AG04449 (cell line): ENCODE measurements at regions of chr22 and their contacts with region 1.

Region 1: GRCh38 chr22:46006379-46007002 is 29.5 kb upstream of the WNT7B start:
- DNase-seq: peak; percentile 42
- H3K4me3 ChIP-seq: 0 out of 2 replicates have a peak overlapping the region, but pooled peaks have one; percentile 8
- CTCF ChIP-seq: peak; percentile 91

Region 2: GRCh38 chr22:45703758-45704157 is 302.7 kb before region 1 on chr22:
- CTCF ChIA-PET with region 1: no interaction called
- POLR2A ChIA-PET with region 1: no interaction called
- DNase-seq: no peak
- H3K4me3 ChIP-seq: no peak overlapping the region
- CTCF ChIP-seq: no peak

Region 3: DNA sequence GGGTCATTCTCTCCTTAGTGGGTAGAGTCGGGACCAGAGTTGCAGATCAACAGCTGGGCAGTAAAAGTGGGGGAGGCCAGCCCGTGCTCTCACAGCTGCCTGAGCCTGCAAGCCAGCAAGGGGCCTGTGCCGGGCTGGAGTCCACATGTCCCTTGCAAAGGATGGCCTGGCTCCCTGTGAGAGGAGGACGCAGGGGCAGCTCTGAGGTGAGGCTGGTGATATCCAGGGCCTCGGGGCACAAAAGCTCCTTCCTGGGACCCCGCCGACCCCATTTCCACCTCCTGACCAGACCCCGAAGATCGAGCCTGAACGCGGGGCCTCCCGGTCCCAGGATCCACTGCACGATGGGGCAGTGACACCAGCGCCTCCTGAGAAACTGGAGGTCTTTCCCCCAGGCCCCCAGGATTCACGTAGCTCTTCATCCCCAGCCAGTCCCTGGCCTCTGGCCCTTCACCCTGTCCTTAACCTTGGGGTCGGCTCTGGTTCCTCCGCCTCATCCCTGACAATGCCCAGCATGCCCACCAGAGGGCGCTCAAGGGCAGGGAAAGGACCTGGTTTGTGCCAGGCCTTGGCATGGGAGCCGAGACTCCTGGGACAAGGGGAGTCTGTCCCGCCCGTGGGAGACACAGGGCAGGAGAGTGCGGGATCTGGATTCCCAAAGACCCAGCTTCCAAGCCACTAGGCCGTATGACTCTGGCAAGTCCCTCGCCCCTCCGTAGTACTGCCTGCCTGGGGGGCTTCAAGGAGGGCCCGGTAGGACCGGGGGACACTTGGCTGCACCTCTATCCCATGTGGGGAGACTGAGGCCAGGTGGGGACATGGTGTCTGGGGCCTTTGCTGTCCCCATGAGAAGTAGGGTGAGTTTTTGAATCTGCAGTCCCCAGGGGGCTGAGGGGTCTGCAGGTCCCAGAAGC is 11.7 kb before region 1 on chr22:
- CTCF ChIA-PET with region 1: interaction called, 155 read pairs
- POLR2A ChIA-PET with region 1: interaction called, 7 read pairs
- DNase-seq: no peak
- H3K4me3 ChIP-seq: no peak overlapping the region
- CTCF ChIP-seq: peak; percentile 97

Region 4: GRCh38 chr22:46054091-46055073 is 47.9 kb after region 1 on chr22:
- CTCF ChIA-PET with region 1: interaction called, 24 read pairs
- POLR2A ChIA-PET with region 1: no interaction called
- DNase-seq: no peak
- H3K4me3 ChIP-seq: peak overlapping the region; percentile 66
- CTCF ChIP-seq: no peak

Region 5: GRCh38 chr22:46087336-46088277 is 81.1 kb after region 1 on chr22:
- CTCF ChIA-PET with region 1: interaction called, 75 read pairs
- POLR2A ChIA-PET with region 1: interaction called, 5 read pairs
- DNase-seq: no peak
- H3K4me3 ChIP-seq: peak overlapping the region; percentile 30
- CTCF ChIP-seq: no peak

Region 6: GRCh38 chr22:46122511-46122971 is 116.0 kb after region 1 on chr22:
- CTCF ChIA-PET with region 1: interaction called, 345 read pairs
- POLR2A ChIA-PET with region 1: interaction called, 9 read pairs
- DNase-seq: no peak
- H3K4me3 ChIP-seq: no peak overlapping the region
- CTCF ChIP-seq: peak; percentile 91

Region 7: DNA sequence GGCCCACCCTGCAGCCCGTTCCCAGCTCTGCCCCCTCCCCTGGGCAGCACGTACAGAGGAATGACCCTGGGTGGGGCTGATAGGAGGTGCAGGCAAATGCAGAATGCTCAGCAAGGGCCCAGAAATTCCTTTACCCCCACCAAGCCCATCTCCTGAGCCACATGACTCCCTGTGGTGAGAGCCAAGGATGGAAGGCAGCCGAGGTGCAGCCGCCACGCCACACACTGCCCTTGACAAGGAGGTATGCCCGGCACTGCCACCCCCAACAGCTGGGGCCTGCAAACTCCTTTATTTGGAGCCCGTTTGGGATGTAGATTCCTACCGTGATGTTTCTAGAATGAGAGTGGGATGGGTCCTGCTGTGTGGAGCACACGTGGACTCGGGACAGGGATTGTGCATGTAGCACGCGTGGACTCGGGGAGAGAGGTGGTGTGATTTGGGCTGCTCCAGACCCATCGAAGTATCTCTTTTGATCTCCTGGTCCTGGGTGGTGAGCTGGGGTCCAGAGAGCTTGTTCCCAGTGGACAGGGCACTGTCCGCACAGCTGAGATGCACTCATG is 303.1 kb after region 1 on chr22:
- CTCF ChIA-PET with region 1: interaction called, 29 read pairs
- POLR2A ChIA-PET with region 1: no interaction called
- DNase-seq: no peak
- H3K4me3 ChIP-seq: no peak overlapping the region
- CTCF ChIP-seq: no peak